Panc1 (cell line): ENCODE measurements at regions of chr15 and their contacts with region 1.

Region 1: DNA sequence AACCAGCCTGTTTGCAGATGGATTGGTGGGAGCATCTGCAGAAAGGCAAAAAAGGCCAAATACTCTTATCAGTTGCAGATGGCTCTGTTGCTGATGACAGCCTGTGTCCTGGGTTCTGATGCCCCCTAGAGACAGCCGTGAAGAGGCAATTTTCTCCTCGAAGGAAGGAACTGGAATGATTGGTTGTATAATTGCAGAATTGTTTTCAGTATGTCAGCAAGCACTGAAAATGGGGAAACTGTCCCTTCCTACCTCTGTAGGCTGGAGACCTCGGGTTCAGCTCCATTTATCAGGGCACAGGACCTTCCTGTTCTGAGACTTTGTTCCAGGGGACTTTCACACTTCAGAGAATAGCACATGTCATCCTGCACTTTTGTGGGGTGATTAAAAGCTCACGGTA is 103.0 kb downstream of the PGPEP1L start:
- DNase-seq: no peak
- ATAC-seq: peak; percentile 73
- H3K4me3 ChIP-seq: no peak overlapping the region
- H3K27ac ChIP-seq: peak overlapping the region; percentile 77
- H3K4me1 ChIP-seq: peaks cover 48% of the 10 kb centered on the region
- H3K27me3 ChIP-seq: no peaks in the 10 kb centered on the region
- CTCF ChIP-seq: peak; percentile 91

Region 2: GRCh38 chr15:98865397-98866339 is 38.9 kb before region 1 on chr15:
- CTCF ChIA-PET with region 1: no interaction called
- POLR2A ChIA-PET with region 1: no interaction called
- in situ Hi-C with region 1: no loop called
- intact Hi-C with region 1: loop called (anchors 5 kb)
- DNase-seq: no peak
- ATAC-seq: peak; percentile 93
- H3K4me3 ChIP-seq: peak overlapping the region; percentile 55 to 79
- H3K27ac ChIP-seq: peak overlapping the region; percentile 100
- H3K4me1 ChIP-seq: peaks cover 76% of the 10 kb centered on the region
- H3K27me3 ChIP-seq: no peaks in the 10 kb centered on the region
- CTCF ChIP-seq: no peak

Region 3: DNA sequence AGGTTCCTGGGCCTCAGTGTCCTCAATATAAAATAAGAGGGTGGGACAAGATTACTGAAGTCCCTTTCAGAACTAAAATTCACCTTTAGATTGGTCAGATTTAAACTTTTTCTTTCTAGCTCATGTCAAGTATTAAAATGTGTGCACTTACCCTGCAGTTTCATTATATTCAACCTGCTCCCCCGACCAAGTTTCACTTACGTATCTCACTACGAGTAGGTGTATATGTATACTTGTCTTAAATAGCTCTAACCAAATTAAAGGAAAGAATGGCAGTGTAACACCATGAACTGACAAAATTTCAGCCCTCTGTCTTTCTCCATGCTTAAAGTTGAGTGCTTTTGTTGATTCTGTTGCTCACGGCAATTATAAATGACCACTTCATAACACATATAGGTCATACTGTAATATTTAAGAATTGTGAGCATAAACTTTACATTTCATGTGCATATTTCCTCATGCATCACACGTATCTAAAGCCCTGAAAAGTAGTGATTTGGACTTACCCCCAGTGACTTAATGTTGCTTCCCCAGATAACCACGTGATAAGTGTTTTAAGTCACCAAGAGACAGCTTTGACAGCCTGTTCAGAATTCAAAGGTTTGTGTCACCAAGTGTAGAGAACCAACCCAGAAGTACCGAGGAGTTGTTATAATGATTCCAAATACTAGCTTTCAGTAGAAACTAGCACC is 33.0 kb after region 1 on chr15:
- CTCF ChIA-PET with region 1: interaction called, 10 read pairs
- POLR2A ChIA-PET with region 1: no interaction called
- in situ Hi-C with region 1: no loop called
- intact Hi-C with region 1: no loop called
- DNase-seq: no peak
- ATAC-seq: no peak
- H3K4me3 ChIP-seq: no peak overlapping the region
- H3K27ac ChIP-seq: no peak overlapping the region
- H3K4me1 ChIP-seq: no peaks in the 10 kb centered on the region
- H3K27me3 ChIP-seq: no peaks in the 10 kb centered on the region
- CTCF ChIP-seq: no peak

Region 4: DNA sequence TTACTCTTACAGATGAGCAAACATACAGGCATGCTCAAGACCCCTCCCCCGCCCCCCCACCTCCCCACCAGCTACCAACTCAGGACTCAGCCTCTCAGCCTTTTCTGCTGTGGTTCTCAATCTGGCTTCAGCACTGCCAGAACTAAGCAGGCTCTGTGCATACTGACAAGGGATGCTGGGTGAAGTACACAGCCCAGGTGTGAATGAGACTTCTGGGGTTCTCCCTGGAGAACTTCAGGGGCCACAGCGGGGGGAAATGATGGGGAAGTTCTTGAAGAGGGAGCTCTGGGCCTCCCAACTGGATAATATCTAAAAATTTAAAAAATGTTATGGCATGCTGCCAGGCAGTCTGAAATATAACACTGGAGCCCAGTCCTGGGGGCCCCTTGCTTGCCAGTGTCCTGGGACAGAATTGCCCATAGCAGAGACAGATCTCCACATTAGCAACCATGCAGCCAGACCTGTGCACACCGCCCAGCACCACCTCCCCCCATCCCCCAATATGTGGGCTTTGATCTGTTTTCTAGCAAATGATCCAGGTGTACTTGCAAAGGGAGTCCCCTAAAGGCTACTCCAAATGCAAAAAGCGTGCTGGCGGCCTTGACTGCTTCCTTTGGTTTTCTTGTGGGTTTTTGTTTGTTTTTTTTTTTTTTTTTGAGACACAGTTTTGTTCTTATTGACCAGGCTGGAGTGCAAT is 61.7 kb after region 1 on chr15:
- CTCF ChIA-PET with region 1: no interaction called
- POLR2A ChIA-PET with region 1: no interaction called
- in situ Hi-C with region 1: no loop called
- intact Hi-C with region 1: no loop called
- DNase-seq: no peak
- ATAC-seq: peak; percentile 57; the same call in 1 of the 2 replicates
- H3K4me3 ChIP-seq: no peak overlapping the region
- H3K27ac ChIP-seq: no peak overlapping the region
- H3K4me1 ChIP-seq: no peaks in the 10 kb centered on the region
- H3K27me3 ChIP-seq: no peaks in the 10 kb centered on the region
- CTCF ChIP-seq: no peak